Head of caudate nucleus (tissue), 42 donors: ENCODE measurements at regions of chr5 and their contacts with region 1.

Region 1: GRCh38 chr5:95256991-95257390 is 27.9 kb downstream of the MCTP1 start:
- DNase-seq: no peak

Region 2: DNA sequence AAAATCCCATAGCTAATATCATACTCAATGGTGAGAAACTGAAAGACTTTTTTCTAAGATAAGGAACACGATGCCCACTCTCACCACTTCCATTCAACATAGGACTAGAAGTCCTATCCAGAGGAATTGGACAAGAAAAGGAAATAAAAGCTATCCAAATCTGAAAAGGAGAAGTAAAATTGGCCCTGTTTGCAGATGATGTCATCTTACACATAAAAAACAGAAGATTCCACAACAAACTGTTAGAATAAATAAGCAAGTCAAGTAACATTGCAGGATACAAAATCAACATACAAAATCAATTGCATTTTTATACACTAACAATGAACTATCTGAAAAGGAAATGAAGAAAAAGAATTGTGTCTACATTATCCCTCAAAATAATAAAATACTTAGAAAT is 280.1 kb before region 1 on chr5:
- intact Hi-C with region 1: loop called (anchors 10 kb)
- DNase-seq: no peak

Region 3: GRCh38 chr5:95591490-95591901 is 334.5 kb after region 1 on chr5:
- intact Hi-C with region 1: no loop called
- DNase-seq: no peak